ENCODE measurements at regions of chr2 and their contacts with region 1.

Region 1: GRCh38 chr2:206062724-206063123 is 23.2 kb downstream of the INO80D start:
- DNase-seq: no peak
- ATAC-seq: peak; percentile 40; the same call in 2 of the 3 replicates
- H3K4me3 ChIP-seq: no peak overlapping the region
- H3K27ac ChIP-seq: no peak overlapping the region
- H3K4me1 ChIP-seq: 0 out of 2 replicates have a peak, but pooled peaks cover 6% of the 10 kb centered on the region
- H3K27me3 ChIP-seq: no peaks in the 10 kb centered on the region
- CTCF ChIP-seq: no peak; the same call in 1 of the 2 replicates
- EP300 ChIP-seq: no peak
- POLR2A ChIP-seq: no peak
- RAD21 ChIP-seq: no peak

Region 2: DNA sequence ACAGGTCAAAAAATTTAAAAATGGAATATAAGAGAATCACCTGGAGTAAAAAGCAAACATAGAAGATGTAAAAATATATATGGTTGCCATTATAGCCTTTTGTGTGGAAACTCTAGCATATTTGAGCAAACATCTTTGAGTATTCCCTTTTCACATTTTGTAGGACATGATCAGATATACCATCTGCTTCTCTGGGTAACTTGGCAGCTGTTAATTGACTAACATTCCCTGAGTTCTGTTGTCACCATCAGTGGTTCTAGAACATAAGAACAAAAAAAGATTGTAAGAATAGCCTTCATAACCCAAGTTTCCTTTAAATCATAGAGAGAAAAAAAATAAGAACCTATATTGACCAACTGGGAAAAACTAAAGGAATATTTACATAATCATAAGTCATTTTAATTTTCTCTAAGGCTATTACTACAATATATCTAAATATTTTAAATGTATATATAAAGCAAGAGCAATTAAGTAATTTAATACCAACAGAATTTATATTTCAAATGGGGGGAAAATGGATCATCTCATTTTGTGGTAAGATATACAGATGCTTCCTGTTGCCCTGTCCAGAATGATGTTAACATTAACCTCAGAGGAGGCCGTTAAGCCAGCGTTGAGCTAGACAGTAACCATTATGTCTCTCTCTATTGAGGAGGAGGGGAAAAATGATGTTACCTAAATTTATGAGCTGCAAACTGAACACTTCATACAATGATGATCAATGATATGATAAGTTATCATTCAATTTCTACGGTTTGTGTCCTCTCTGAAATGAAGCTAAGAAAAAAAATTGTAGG is 33.0 kb after region 1 on chr2:
- CTCF ChIA-PET with region 1: no interaction called
- POLR2A ChIA-PET with region 1: no interaction called
- in situ Hi-C with region 1: no loop called
- intact Hi-C with region 1: loop called (anchors 1 kb)
- DNase-seq: no peak
- ATAC-seq: no peak
- H3K4me3 ChIP-seq: no peak overlapping the region
- H3K27ac ChIP-seq: no peak overlapping the region
- H3K4me1 ChIP-seq: peaks cover 10% of the 10 kb centered on the region; the same call in 1 of the 2 replicates
- H3K27me3 ChIP-seq: no peaks in the 10 kb centered on the region
- CTCF ChIP-seq: no peak
- EP300 ChIP-seq: no peak
- POLR2A ChIP-seq: no peak
- RAD21 ChIP-seq: no peak

Region 3: GRCh38 chr2:206266130-206267125 is 203.7 kb after region 1 on chr2:
- CTCF ChIA-PET with region 1: no interaction called
- POLR2A ChIA-PET with region 1: no interaction called
- in situ Hi-C with region 1: no loop called
- intact Hi-C with region 1: no loop called
- DNase-seq: no peak
- ATAC-seq: peak; percentile 53
- H3K4me3 ChIP-seq: no peak overlapping the region
- H3K27ac ChIP-seq: no peak overlapping the region
- H3K4me1 ChIP-seq: no peaks in the 10 kb centered on the region
- H3K27me3 ChIP-seq: peaks cover 7 to 67% of the 10 kb centered on the region in 2 experiments; a peak in 4 of 5 replicates
- CTCF ChIP-seq: no peak
- EP300 ChIP-seq: no peak
- POLR2A ChIP-seq: no peak
- RAD21 ChIP-seq: no peak